ENCODE measurements at regions of chr4 and their contacts with region 1.

Region 1: GRCh38 chr4:169810325-169811323 is 52.9 kb upstream of the HPF1 start:
- DNase-seq: peak; percentile 71 to 75
- H3K4me3 ChIP-seq: no peak overlapping the region
- H3K4me1 ChIP-seq: peaks cover 4% of the 10 kb centered on the region; the same call in 1 of the 2 replicates
- H3K27me3 ChIP-seq: no peaks in the 10 kb centered on the region

Region 2: DNA sequence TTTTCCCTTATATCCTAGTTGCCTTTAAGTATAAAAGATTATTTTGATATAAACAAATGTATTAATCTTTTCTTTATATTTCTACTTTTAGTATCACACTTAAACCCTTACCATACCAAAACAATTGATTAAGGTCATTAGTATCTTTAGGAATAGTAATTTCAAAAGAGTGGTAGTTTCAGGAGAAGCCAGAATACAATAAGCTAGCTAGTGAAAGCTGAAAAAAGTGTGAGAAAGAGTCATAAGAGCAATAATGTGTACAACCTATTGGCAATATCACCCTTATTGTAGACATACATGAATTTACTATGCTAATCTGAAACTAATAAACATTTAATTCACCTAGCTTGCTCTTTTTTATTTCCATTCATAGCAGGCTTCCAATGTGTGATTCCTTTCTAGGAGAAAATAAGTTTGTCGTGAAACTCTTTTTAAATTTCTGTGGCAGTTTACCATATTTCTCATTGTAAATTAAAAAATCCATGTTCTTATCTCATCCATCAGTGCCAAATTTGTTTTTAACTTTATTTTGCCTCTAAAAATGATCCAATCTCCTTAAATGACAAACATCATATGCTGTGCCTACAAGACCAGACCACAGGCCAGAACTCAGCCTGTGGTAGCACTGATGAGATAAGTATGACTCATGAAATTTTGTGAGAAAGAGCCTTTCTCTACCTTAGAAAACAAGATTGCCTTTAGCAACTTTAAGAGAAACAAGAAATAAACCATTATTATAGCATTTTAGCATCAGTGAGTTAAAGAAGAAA is 206.3 kb before region 1 on chr4:
- in situ Hi-C with region 1: no loop called
- DNase-seq: no peak
- H3K4me3 ChIP-seq: no peak overlapping the region
- H3K4me1 ChIP-seq: no peaks in the 10 kb centered on the region
- H3K27me3 ChIP-seq: no peaks in the 10 kb centered on the region

Region 3: DNA sequence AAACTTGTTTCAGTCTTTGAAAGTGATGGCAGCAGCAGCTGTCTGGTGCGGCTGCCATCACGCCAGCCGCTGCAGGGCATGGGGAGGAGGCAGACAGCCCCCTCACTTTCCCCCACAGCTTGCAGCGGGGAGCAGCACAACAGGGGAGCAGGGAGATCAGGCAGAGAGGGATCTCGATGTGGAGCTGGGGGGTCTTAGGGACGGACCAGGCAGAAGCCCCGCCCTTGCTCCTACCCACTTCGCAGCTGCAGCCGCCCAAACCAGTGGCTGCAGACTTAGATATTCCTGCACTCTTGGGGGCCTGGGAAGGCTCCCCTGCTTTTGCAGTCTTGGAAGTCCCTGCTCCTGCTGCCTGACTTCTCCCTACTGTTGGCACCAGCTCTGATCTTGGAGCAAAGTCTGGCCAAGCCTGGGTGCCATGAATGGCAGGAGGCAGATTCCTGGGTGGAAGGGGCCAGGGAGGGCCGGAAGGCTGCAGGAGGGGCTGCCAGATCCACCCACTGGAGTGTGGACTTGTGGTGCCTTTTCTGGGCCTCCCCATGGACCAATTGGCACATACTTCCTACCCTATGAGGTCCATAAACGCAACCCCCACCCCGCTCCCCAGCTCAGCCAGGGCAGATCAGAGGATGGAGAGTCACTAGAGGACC is 229.5 kb after region 1 on chr4:
- in situ Hi-C with region 1: loop called (anchors 5 kb)
- DNase-seq: no peak
- H3K4me3 ChIP-seq: no peak overlapping the region
- H3K4me1 ChIP-seq: peaks cover 8% of the 10 kb centered on the region
- H3K27me3 ChIP-seq: no peaks in the 10 kb centered on the region